HepG2 (cell line): ENCODE measurements at regions of chr12 and their contacts with region 1.

Region 1: GRCh38 chr12:52082988-52083637 is 3.6 kb downstream of the SMIM41 start:
- DNase-seq: peak; percentile 40
- ATAC-seq: peak; percentile 65
- H3K4me3 ChIP-seq: peak overlapping the region; percentile 3 to 71 (median 13); a peak in 2 of 6 replicates
- H3K27ac ChIP-seq: peak overlapping the region; percentile 46
- H3K4me1 ChIP-seq: peaks cover 49% of the 10 kb centered on the region
- H3K27me3 ChIP-seq: peaks cover 11 to 36% of the 10 kb centered on the region in 2 experiments
- CTCF ChIP-seq: peak; percentile 90
- EP300 ChIP-seq: no peak
- POLR2A ChIP-seq: no peak
- RAD21 ChIP-seq: peak; percentile 89

Region 2: GRCh38 chr12:51090705-51091229 is 992.3 kb before region 1 on chr12:
- CTCF ChIA-PET with region 1: no interaction called
- POLR2A ChIA-PET with region 1: no interaction called
- in situ Hi-C with region 1: no loop called
- intact Hi-C with region 1: no loop called
- DNase-seq: no peak
- ATAC-seq: no peak
- H3K4me3 ChIP-seq: no peak overlapping the region
- H3K27ac ChIP-seq: no peak overlapping the region
- H3K4me1 ChIP-seq: no peaks in the 10 kb centered on the region
- H3K27me3 ChIP-seq: no peaks in the 10 kb centered on the region; a peak in 1 of 5 replicates
- CTCF ChIP-seq: no peak
- EP300 ChIP-seq: no peak
- POLR2A ChIP-seq: no peak
- RAD21 ChIP-seq: no peak

Region 3: DNA sequence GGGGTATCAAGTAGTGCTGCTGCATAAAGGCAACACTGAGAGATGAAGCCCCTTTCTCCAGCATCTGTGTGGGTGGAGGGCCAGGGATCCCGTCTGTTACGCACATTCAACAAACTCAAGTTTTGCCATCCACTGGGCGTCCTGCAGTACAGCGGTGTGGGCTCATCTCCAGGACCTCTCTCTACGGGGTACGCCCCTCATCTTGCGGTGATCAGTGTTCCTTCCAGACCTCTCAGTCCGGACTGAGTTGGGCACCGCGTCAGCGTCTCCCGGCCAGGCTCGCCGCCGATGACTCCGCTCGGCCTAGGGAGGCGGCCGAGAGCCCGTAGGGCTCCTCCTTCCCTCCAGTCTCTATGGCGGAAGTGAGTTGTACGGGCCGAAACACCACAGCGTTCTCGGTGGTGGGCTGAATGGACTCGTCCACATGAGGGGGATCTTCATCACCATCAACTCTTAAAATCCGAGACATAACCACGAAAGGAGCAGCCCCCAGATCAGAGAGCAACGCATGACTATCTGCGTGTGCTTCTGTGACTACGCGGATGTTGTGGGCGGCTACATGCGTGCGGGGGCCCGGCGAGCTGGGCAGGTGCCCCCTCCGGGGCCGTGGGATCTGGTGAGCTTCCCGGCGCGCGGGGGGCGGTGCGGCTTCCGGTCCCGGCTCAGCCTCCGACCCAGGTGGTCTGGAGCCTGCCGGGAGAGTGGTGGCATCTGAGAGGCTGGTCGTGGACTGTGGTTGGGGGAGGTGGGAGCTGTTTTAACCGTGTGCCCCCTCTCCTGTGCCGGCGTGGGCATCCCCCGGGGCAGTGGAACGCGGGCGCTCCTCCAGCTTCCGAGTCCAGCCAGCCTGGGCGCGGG is 13.6 kb before region 1 on chr12 and contains the start of gene ATG101:
- CTCF ChIA-PET with region 1: interaction called, 3 read pairs
- POLR2A ChIA-PET with region 1: interaction called, 11 read pairs
- in situ Hi-C with region 1: no loop called
- intact Hi-C with region 1: no loop called
- DNase-seq: peak; percentile 90
- ATAC-seq: peak; percentile 97
- H3K4me3 ChIP-seq: peak within 1 kb of the TSS; percentile 87 to 98 (median 88)
- H3K27ac ChIP-seq: peak within 1 kb of the TSS; percentile 85
- H3K4me1 ChIP-seq: peaks cover 46% of the 10 kb centered on the region
- H3K27me3 ChIP-seq: no peaks in the 10 kb centered on the region; a peak in 1 of 5 replicates
- CTCF ChIP-seq: peak; percentile 93
- EP300 ChIP-seq: peak in 1 of 2 experiments; percentile 22; a peak in 1 of 4 replicates
- POLR2A ChIP-seq: peak; percentile 72 to 77
- RAD21 ChIP-seq: peak; percentile 54; the same call in 1 of the 2 replicates
- total RNA-seq, gene ATG101: 66.7 and 67.7 TPM in 2 replicates

Region 4: GRCh38 chr12:52121824-52122539 is 38.9 kb after region 1 on chr12:
- CTCF ChIA-PET with region 1: interaction called, 3 read pairs
- POLR2A ChIA-PET with region 1: no interaction called
- in situ Hi-C with region 1: no loop called
- intact Hi-C with region 1: loop called (anchors 5 kb)
- DNase-seq: no peak
- ATAC-seq: 0 out of 3 replicates have a peak, but pooled peaks have one; percentile 6
- H3K4me3 ChIP-seq: peak overlapping the region in 1 of 3 experiments; percentile 6; a peak in 1 of 6 replicates
- H3K27ac ChIP-seq: no peak overlapping the region
- H3K4me1 ChIP-seq: peaks cover 71% of the 10 kb centered on the region
- H3K27me3 ChIP-seq: peaks cover 4 to 26% of the 10 kb centered on the region in 2 experiments; a peak in 3 of 5 replicates
- CTCF ChIP-seq: peak; percentile 85
- EP300 ChIP-seq: no peak
- POLR2A ChIP-seq: no peak
- RAD21 ChIP-seq: peak; percentile 50